ENCODE measurements at regions of chr5 and their contacts with region 1.

Region 1: DNA sequence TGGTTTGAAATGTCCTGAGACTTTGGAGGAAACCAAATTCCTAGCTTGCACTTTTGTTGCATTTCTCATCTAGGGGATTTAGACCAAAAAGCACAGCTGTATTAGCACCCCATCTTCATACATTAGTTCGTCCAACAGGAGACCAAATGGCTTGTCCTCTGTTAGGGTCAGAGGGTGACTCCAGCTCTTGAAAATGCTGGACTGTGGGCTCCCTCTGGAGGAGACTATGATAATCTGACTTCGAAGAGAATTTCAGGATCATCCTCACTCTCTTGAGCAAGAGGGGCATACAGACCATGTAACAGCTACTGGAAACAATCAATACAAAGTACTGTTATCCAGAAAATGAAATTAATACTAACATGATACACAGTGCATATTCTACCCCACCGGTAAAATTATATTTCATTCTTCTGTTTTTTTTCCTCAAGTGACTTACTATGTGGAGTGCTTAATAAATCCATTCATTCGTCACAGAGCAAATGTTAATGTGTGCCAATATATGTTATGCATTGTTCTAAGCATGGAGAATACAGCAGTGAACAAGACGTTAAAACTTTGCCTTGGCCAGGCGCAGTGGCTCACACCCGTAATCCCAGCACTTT is 63.7 kb upstream of the PPP2CA start:
- DNase-seq: peak in 4 of 5 donors; percentile 43 to 65 (median 50)
- ATAC-seq: peak; percentile 94 to 97 (median 95)
- H3K4me3 ChIP-seq: no peak overlapping the region
- H3K27ac ChIP-seq: no peak overlapping the region
- H3K4me1 ChIP-seq: peaks cover 0 to 3% (median 0%) of the 10 kb centered on the region in 12 donors
- H3K27me3 ChIP-seq: no peaks in the 10 kb centered on the region
- CTCF ChIP-seq: peak; percentile 54 to 85 (median 74)
- POLR2A ChIP-seq: no peak

Region 2: GRCh38 chr5:134101686-134102439 is 187.7 kb before region 1 on chr5:
- intact Hi-C with region 1: loop called in 2 of 10 experiments (anchors 5 kb)
- DNase-seq: peak in 4 of 5 donors; percentile 53 to 86 (median 63)
- ATAC-seq: peak; percentile 47 to 85 (median 78)
- H3K4me3 ChIP-seq: no peak overlapping the region
- H3K27ac ChIP-seq: no peak overlapping the region
- H3K4me1 ChIP-seq: peaks cover 0 to 34% (median 6%) of the 10 kb centered on the region in 12 donors
- H3K27me3 ChIP-seq: no peaks in the 10 kb centered on the region
- CTCF ChIP-seq: peak; percentile 78 to 96 (median 86)
- POLR2A ChIP-seq: no peak

Region 3: GRCh38 chr5:134184155-134185135 is 105.2 kb before region 1 on chr5:
- intact Hi-C with region 1: loop called (anchors 1 to 2 kb)
- DNase-seq: peak; percentile 63 to 73 (median 69)
- ATAC-seq: peak; percentile 76 to 89 (median 86)
- H3K4me3 ChIP-seq: no peak overlapping the region
- H3K27ac ChIP-seq: no peak overlapping the region
- H3K4me1 ChIP-seq: peaks cover 0 to 10% (median 0%) of the 10 kb centered on the region in 12 donors
- H3K27me3 ChIP-seq: no peaks in the 10 kb centered on the region
- CTCF ChIP-seq: peak; percentile 84 to 97 (median 92)
- POLR2A ChIP-seq: no peak

Region 4: DNA sequence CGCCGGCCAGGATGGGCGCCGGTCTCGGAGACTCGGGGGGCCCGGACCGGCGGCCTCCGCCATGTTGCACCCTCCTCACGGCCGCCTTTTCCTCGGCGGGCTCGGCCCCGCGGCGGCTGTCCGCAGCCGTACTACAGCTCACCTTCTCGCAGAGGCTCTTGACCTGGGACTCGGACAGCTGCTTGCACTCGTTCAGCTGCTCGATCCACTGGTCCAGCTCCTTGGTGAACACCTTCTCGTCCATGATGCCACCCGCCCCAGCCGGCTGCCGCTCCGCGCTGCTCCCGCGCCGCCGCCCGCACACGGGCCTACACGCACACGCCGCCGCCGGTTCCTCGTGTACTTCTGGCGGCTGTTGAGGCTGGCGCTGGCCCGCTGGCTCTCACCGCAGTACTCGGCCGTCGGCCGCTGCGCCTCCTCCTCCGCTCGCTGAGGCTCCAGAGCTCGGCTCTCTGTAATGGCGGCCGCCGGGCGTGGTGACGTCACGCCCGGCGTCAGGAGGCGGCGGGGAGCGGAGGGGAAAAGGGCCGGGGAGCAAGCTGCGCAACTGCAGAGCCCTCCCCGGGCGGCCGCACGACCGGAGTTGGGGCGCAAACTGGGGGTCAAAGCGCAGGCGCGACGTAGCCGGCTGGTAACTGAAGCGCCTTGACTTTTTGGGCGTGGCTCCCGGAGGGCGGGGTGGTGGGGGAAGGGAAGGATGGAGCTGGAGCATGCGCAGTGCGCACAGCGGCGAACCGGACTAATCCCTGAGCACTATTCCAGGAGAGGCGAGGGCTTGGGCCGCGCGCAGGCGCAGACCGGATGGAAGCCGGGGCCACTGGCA is 63.8 kb before region 1 on chr5 and contains the start of gene PPP2CA:
- intact Hi-C with region 1: loop called in 1 of 10 experiments (anchors 5 kb)
- DNase-seq: peak; percentile 98 to 100 (median 99)
- ATAC-seq: peak; percentile 92 to 97 (median 96)
- H3K4me3 ChIP-seq: peak within 1 kb of the TSS; percentile 64 to 100 (median 94)
- H3K27ac ChIP-seq: peak within 1 kb of the TSS; percentile 98 to 100 (median 99)
- H3K4me1 ChIP-seq: peaks cover 4 to 69% (median 49%) of the 10 kb centered on the region in 12 donors
- H3K27me3 ChIP-seq: no peaks in the 10 kb centered on the region
- CTCF ChIP-seq: peak in 2 of 12 donors; percentile 7 to 9
- POLR2A ChIP-seq: peak; percentile 54 to 75
- total RNA-seq, gene PPP2CA: 143 to 219 (median 180) TPM

Region 5: DNA sequence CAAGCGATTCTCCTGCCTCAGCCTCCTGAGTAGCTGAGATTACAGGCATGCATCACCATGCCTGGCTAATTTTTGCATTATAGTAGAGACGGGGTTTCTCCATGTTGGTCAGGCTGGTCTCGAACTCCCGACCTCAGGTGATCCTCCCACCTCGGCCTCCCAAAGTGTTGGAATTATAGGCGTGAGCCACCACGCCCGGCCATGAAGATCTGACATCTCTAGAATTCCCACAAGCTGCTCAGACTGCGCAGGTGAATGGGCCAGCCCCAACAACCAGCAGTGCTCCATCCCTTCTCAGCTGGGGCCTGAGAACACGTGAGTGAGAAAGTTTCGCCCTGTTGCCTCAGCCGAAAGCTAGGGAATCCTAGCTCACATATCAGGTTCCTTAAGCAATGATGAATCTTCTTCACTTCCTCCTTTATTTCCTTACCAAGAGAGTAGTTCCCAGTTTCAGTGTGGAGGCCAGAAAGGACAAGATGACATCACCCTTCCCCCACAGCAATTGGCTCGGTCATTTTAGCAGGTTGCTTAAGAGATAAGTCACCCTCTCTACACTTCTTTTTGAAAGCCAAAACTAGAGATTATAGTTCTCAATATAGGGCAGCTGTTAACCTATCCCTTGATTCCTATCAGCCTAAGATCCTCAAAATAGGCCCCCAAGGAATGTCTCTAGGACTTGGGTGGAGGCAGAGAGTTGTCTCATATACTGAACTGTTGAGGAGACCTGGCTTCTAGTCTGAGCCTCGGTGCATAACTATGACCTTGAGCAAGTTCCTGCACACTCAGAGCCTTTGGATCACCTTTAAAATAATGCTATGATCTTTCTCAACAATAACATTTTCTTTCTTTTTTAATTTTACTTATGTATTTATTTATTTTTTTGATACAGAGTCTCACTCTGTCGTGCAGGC is 39.9 kb before region 1 on chr5:
- intact Hi-C with region 1: loop called in 1 of 10 experiments (anchors 5 kb)
- DNase-seq: peak in 4 of 5 donors; percentile 21 to 53 (median 38)
- ATAC-seq: peak in 3 of 4 donors; percentile 10 to 41 (median 35)
- H3K4me3 ChIP-seq: no peak overlapping the region
- H3K27ac ChIP-seq: peak overlapping the region in 7 of 12 donors; percentile 2 to 61 (median 39)
- H3K4me1 ChIP-seq: peaks cover 0 to 45% (median 10%) of the 10 kb centered on the region in 12 donors
- H3K27me3 ChIP-seq: no peaks in the 10 kb centered on the region
- CTCF ChIP-seq: no peak
- POLR2A ChIP-seq: no peak

Measured in heart left ventricle (tissue), 16 donors.